ENCODE measurements at regions of chr17 and their contacts with region 1.

Region 1: DNA sequence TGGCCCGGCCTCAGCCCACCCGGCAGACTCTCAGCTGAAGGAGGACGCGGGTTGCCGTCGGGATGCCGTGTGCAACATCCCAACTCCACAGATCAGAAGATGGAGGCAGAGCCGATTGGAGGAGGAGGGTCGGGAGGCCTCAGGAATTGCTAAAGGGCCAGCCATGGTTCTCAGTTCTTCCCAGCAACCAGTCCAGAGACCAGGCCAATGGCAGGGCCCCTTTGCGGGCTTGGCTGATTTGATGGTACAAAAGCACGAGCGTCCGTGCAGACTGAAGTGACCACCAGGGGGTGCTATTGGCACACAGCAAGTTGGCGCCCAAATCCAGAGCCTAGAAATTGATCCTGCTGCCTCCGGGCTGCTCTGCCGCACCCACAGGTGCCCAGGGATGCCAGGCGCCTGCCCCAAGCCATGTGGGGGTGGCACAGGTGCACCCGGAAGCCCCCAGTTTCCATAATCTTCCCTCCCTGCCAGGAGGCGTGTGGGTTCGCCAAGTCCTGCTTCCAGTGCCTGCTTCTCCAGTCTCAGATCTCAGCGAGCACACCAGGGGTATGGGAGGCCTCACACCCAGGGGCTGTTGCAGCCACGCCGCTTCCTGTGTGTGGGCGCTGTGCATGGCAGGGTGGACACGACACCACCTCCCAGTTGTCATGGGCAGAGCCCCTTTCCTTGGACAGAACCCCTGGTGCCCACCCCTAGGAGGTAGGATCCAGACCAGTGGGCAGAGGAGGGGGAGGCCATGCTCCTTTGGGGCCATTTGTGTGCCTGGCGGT is 7.1 kb upstream of the TEX19 start:
- DNase-seq: peak; percentile 86
- H3K4me3 ChIP-seq: no peak overlapping the region
- H3K27ac ChIP-seq: peak overlapping the region in 1 of 4 donors; percentile 5
- H3K4me1 ChIP-seq: peaks cover 0 to 11% (median 1%) of the 10 kb centered on the region in 4 donors
- H3K27me3 ChIP-seq: peaks cover 36% of the 10 kb centered on the region
- CTCF ChIP-seq: peak; percentile 93 to 98 (median 95)
- EP300 ChIP-seq: no peak
- POLR2A ChIP-seq: no peak

Region 2: DNA sequence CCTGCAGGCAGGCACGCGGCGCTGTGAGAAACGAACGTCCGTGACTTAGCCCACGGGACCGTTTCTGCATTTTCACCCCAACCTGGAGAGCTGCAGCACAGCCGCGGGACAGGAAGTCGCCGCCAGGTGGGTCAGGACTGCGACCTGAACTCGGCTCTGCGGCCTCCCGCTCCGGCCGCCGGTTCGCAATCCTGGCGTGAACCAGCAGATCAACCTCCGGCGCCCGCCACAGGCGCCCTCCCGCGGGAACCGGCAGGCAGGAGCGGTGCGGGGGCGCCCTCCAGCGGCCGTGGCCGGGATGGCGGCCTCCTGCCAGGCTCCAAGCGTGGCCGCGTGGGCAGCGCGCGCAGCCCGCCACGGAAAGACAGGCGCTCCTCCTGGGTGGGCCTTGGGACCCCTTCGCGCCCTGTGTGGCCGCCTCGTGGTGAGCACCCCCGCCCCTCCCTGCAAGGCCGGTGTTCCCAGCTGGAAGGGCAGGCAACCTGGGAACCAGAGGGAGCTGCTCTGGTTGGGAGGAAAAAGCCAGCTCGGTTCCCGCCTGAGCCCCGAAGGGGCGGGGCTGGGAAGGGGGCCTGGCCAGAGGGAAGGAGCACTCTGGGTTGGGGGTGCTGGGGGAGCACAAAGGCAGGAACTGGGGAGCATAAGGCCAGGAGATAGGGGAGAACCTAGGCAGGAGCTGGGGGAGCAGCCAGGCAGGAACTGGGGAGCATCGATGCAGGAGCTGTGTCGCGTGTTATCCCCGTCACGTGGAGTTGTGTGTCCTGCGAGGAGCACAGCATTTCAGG is 867.5 kb before region 1 on chr17:
- in situ Hi-C with region 1: no loop called
- intact Hi-C with region 1: no loop called
- DNase-seq: peak; percentile 90
- H3K4me3 ChIP-seq: peak overlapping the region; percentile 16 to 52 (median 44)
- H3K27ac ChIP-seq: no peak overlapping the region
- H3K4me1 ChIP-seq: peaks cover 20 to 44% (median 38%) of the 10 kb centered on the region in 4 donors
- H3K27me3 ChIP-seq: peaks cover 29% of the 10 kb centered on the region
- CTCF ChIP-seq: peak; percentile 78 to 99 (median 97)
- EP300 ChIP-seq: no peak
- POLR2A ChIP-seq: no peak

Region 3: GRCh38 chr17:82418001-82418986 is 66.4 kb after region 1 on chr17 and contains the starts of genes HEXD and OGFOD3:
- in situ Hi-C with region 1: loop called in 2 of 4 experiments (anchors 5 to 10 kb)
- intact Hi-C with region 1: loop called (anchors 5 kb)
- DNase-seq: peak; percentile 90
- H3K4me3 ChIP-seq: peak within 1 kb of the TSS; percentile 74 to 80 (median 75)
- H3K27ac ChIP-seq: peak within 1 kb of the TSS; percentile 87 to 97 (median 92)
- H3K4me1 ChIP-seq: peaks cover 4 to 26% (median 20%) of the 10 kb centered on the region in 4 donors
- H3K27me3 ChIP-seq: no peaks in the 10 kb centered on the region
- CTCF ChIP-seq: peak in 2 of 5 experiments; percentile 1 to 22
- EP300 ChIP-seq: no peak
- POLR2A ChIP-seq: peak; percentile 55
- total RNA-seq, gene HEXD: 45.5 to 258 (median 102) TPM
- total RNA-seq, gene OGFOD3: 7.9 to 27.5 (median 25.9) TPM

Region 4: DNA sequence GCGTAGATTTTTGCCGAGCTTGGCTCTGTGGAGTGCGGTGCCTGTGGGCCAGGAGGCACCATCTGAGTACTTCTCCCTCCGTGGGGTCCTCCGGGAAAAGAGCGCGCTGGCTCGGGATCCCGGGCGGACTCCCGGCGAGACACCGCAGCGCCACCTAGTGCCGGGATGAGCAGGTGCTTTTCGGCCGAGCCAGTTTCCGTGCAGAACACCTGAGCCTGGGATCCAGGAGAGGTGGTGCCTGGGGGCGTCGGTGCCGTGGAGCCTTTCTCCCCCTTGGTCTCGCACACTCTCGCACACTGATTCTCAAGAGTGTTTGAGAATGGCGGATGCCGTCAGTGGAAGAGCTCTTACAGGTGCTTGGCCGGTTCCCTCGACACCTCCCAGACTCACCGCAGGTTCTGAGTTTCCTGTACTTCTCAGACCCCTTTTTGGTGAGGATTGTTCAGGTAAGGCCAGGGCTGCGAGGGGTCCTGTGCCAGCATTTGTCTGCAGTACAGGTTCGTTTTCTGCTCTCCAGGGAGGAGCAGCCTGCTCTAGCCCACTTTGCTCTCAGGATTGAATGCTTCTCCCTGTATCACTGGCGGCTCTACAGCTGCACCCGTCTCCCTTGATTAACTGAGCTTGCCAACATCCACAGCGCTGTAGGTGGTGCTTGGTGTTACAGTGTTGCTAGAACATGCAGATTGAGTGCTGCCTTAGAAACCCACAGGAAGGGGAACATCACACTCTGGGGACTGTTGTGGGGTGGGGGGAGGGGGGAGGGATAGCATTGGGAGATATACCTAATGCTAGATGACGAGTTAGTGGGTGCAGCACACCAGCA is 423.3 kb after region 1 on chr17:
- in situ Hi-C with region 1: no loop called
- intact Hi-C with region 1: loop called (anchors 5 kb)
- DNase-seq: peak; percentile 76
- H3K4me3 ChIP-seq: peak overlapping the region in 1 of 4 donors; percentile 27
- H3K27ac ChIP-seq: no peak overlapping the region
- H3K4me1 ChIP-seq: peaks cover 7 to 22% (median 9%) of the 10 kb centered on the region in 4 donors
- H3K27me3 ChIP-seq: no peaks in the 10 kb centered on the region
- CTCF ChIP-seq: peak; percentile 84 to 94 (median 89)
- EP300 ChIP-seq: no peak
- POLR2A ChIP-seq: no peak

Region 5: DNA sequence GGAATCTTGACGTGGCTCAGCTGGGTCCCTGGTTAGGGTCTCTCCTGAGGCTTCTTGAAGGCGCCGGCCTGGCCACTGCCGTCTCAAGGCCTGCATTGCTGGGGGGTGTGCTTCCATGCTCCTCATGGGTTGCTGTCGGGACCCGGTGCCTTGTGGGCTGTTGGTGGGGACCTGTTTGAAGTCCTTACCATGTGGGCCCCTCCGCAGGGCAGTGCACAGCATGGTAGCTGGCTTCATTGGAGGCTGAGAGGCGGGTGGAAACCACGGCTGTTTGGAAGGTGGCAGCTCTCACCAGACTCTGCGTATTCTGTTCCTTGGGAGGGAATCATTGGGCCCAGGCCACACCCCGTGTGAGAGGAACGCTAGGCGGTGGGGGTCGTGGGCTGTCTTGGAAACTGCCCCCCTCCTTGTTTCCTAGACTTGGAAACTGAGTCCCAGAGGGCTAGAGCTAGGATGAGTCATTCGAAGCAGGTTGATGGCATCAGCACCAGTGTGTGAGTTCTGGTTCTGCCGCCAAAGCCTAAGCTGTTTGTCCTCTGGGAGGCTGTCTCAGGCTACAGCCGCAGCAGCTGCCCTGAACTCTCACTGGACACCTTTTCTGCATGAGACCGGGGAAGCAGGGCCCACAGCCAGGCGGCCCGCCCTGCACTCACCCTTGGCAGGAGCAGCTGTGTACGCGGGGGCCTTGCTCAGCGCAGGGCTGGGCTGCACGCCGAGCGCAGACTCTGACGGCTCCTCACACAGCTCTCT is 452.7 kb after region 1 on chr17:
- in situ Hi-C with region 1: no loop called
- intact Hi-C with region 1: no loop called
- DNase-seq: peak; percentile 34
- H3K4me3 ChIP-seq: no peak overlapping the region
- H3K27ac ChIP-seq: peak overlapping the region; percentile 6 to 66 (median 48)
- H3K4me1 ChIP-seq: no peaks in the 10 kb centered on the region
- H3K27me3 ChIP-seq: no peaks in the 10 kb centered on the region
- CTCF ChIP-seq: no peak
- EP300 ChIP-seq: no peak
- POLR2A ChIP-seq: no peak